A549 (cell line): ENCODE measurements at regions of chr3 and their contacts with region 1.

Region 1: DNA sequence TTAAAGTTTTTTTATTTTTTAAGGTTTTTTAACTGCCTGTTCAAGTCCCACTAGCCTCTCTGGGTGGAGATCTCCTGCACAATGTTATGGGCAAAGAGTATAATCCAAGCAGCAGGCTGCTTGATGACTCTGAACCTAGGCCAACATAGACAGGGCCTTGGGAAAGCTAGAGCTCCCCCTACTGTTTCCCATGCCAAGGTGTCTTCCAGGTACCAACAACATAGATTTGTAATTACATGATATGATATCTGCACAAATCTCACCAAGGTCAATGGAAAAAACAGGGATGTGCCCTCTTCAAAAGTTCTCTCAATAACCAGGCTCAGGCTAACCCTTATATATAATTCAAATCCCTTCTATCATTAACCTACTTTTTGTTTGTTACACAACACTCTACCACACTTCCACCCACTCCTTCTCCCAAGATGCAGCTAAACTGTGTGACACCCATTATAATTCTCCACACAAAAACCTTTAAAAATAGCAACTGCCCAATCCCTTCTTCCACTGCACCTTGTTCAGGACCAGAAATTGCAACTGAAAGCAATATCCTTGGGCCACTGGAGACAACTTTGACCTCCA is 43.8 kb downstream of the RBM15B start:
- DNase-seq: peak; percentile 23 to 65
- ATAC-seq: peak; percentile 86 to 92
- H3K4me3 ChIP-seq: no peak overlapping the region
- H3K27ac ChIP-seq: no peak overlapping the region
- H3K4me1 ChIP-seq: no peaks in the 10 kb centered on the region
- CTCF ChIP-seq: peak; percentile 45
- EP300 ChIP-seq: no peak
- POLR2A ChIP-seq: no peak
- RAD21 ChIP-seq: peak in 1 of 2 experiments; percentile 20; a peak in 2 of 5 replicates

Region 2: GRCh38 chr3:50890688-50891344 is 544.0 kb before region 1 on chr3:
- CTCF ChIA-PET with region 1: no interaction called
- POLR2A ChIA-PET with region 1: no interaction called
- DNase-seq: no peak
- ATAC-seq: no peak
- H3K4me3 ChIP-seq: no peak overlapping the region
- H3K27ac ChIP-seq: no peak overlapping the region
- H3K4me1 ChIP-seq: no peaks in the 10 kb centered on the region
- CTCF ChIP-seq: no peak
- EP300 ChIP-seq: no peak
- POLR2A ChIP-seq: no peak
- RAD21 ChIP-seq: no peak

Region 3: GRCh38 chr3:51445544-51446280 is 10.9 kb after region 1 on chr3:
- CTCF ChIA-PET with region 1: interaction called, 11 read pairs
- POLR2A ChIA-PET with region 1: no interaction called
- DNase-seq: no peak
- ATAC-seq: no peak
- H3K4me3 ChIP-seq: no peak overlapping the region
- H3K27ac ChIP-seq: no peak overlapping the region
- H3K4me1 ChIP-seq: 0 out of 3 replicates have a peak, but pooled peaks cover 4% of the 10 kb centered on the region
- CTCF ChIP-seq: no peak
- EP300 ChIP-seq: no peak
- POLR2A ChIP-seq: no peak
- RAD21 ChIP-seq: no peak